CD8-positive, alpha-beta T cell (primary cell): ENCODE measurements at regions of chr6 and their contacts with region 1.

Region 1: GRCh38 chr6:32838114-32838958 is at the start of gene TAP2:
- DNase-seq: peak; percentile 96 to 99 (median 97)
- ATAC-seq: peak; percentile 90
- H3K4me3 ChIP-seq: peak within 1 kb of the TSS; percentile 64 to 83
- H3K4me3 Mint-ChIP-seq: peak within 1 kb of the TSS; percentile 93
- H3K27ac ChIP-seq: peak within 1 kb of the TSS; percentile 88 to 100
- H3K27ac Mint-ChIP-seq: peak within 1 kb of the TSS; percentile 98
- H3K4me1 ChIP-seq: peaks cover 60% of the 10 kb centered on the region
- H3K4me1 Mint-ChIP-seq: peaks cover 89% of the 10 kb centered on the region
- H3K27me3 ChIP-seq: no peaks in the 10 kb centered on the region
- H3K27me3 Mint-ChIP-seq: no peaks in the 10 kb centered on the region
- CTCF ChIP-seq: peak; percentile 99
- total RNA-seq, gene TAP2: 88.9 to 91.0 TPM

Region 2: GRCh38 chr6:32796848-32797776 is 41.2 kb before region 1 on chr6:
- CTCF ChIA-PET with region 1: interaction called, 14 read pairs
- POLR2A ChIA-PET with region 1: no interaction called
- intact Hi-C with region 1: no loop called
- DNase-seq: peak; percentile 60 to 88 (median 81)
- ATAC-seq: peak; percentile 79
- H3K4me3 ChIP-seq: peak overlapping the region in 1 of 2 experiments; percentile 33
- H3K4me3 Mint-ChIP-seq: peak overlapping the region; percentile 64
- H3K27ac ChIP-seq: no peak overlapping the region
- H3K27ac Mint-ChIP-seq: no peak overlapping the region
- H3K4me1 ChIP-seq: peaks cover 17% of the 10 kb centered on the region
- H3K4me1 Mint-ChIP-seq: peaks cover 27% of the 10 kb centered on the region
- H3K27me3 ChIP-seq: peaks cover 0 to 6% of the 10 kb centered on the region in 2 experiments
- H3K27me3 Mint-ChIP-seq: peaks cover 36% of the 10 kb centered on the region
- CTCF ChIP-seq: peak; percentile 97

Region 3: DNA sequence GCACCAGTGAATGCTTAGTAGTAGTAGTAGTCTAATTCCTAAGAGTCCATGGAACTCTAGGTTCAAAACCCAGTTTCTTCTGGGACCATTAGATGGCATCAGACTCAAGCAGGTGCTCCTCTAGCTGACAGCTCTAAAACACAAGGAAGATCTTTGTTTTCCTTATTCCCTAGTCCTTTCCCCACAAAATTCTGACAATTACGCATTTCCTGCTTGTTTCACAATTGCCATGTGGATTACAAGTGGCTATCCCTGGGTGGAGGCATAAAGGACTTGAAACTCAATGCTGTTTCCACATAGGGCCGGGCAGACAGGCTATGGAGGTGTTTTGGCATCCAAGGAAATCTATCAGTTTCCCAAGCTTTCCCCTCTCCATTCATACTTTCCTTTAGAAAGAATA is 12.4 kb before region 1 on chr6:
- CTCF ChIA-PET with region 1: interaction called, 60 read pairs
- POLR2A ChIA-PET with region 1: interaction called, 6 read pairs
- intact Hi-C with region 1: no loop called
- DNase-seq: peak in 1 of 9 experiments; percentile 39
- ATAC-seq: no peak
- H3K4me3 ChIP-seq: no peak overlapping the region
- H3K4me3 Mint-ChIP-seq: no peak overlapping the region
- H3K27ac ChIP-seq: no peak overlapping the region
- H3K27ac Mint-ChIP-seq: no peak overlapping the region
- H3K4me1 ChIP-seq: no peaks in the 10 kb centered on the region
- H3K4me1 Mint-ChIP-seq: peaks cover 2% of the 10 kb centered on the region
- H3K27me3 ChIP-seq: no peaks in the 10 kb centered on the region
- H3K27me3 Mint-ChIP-seq: no peaks in the 10 kb centered on the region
- CTCF ChIP-seq: no peak

Region 4: DNA sequence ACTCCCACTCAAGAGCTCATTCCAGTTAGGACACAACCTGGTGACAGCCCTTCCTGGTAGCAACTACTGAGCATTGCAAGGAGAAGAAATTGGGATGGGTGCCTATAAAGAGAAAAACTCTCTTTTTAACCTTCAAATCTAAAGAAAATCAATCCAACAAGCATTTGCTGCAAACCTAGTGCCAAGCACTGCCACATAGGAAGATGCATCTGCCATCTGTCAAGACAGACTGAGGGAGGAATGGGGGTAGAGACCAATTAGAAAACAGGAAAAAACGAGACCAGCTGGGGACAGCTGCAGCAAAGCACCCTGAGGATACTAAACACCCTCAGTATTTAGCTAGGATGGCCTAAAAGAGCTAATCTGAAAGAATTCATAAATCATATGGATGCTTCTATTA is 74.6 kb after region 1 on chr6:
- CTCF ChIA-PET with region 1: interaction called, 11 read pairs
- POLR2A ChIA-PET with region 1: interaction called, 3 read pairs
- intact Hi-C with region 1: no loop called
- DNase-seq: no peak
- ATAC-seq: no peak
- H3K4me3 ChIP-seq: no peak overlapping the region
- H3K4me3 Mint-ChIP-seq: no peak overlapping the region
- H3K27ac ChIP-seq: no peak overlapping the region
- H3K27ac Mint-ChIP-seq: no peak overlapping the region
- H3K4me1 ChIP-seq: no peaks in the 10 kb centered on the region
- H3K4me1 Mint-ChIP-seq: no peaks in the 10 kb centered on the region
- H3K27me3 ChIP-seq: no peaks in the 10 kb centered on the region
- H3K27me3 Mint-ChIP-seq: peaks cover 15% of the 10 kb centered on the region
- CTCF ChIP-seq: no peak

Region 5: DNA sequence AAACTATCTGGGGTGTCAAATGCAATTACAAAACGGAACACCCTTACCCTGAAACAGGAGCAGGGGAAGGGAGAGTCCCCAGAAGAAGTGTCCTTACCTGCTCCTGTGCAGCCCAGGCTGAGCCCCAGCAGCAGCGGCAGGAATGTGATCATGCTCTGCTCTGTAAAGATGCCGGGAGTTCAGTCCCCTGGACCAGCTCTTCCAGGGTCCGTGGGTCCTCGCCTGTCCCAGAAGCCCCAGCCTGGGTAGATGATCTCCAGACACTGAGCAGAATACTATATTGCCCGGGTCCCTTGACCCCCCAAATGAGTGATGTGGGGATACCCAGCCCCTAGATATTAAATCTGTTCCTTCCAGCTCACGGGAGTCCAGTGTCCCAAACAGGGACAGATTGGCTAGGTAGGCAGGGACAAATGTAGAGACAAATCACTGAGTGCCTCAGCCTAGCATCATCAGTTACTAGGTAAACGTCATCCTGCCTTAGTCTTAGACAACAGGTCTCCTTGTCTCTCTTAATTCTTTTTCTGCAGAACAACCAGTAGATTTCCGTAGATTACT is 102.4 kb after region 1 on chr6 and contains the start of gene HLA-DMB:
- CTCF ChIA-PET with region 1: interaction called, 7 read pairs
- POLR2A ChIA-PET with region 1: interaction called, 15 read pairs
- intact Hi-C with region 1: no loop called
- DNase-seq: peak in 7 of 9 experiments; percentile 18 to 91 (median 51)
- ATAC-seq: peak; percentile 78
- H3K4me3 ChIP-seq: peak within 1 kb of the TSS; percentile 64 to 79
- H3K4me3 Mint-ChIP-seq: peak within 1 kb of the TSS; percentile 94
- H3K27ac ChIP-seq: peak within 1 kb of the TSS; percentile 72 to 91
- H3K27ac Mint-ChIP-seq: peak within 1 kb of the TSS; percentile 97
- H3K4me1 ChIP-seq: peaks cover 61% of the 10 kb centered on the region
- H3K4me1 Mint-ChIP-seq: peaks cover 62% of the 10 kb centered on the region
- H3K27me3 ChIP-seq: no peaks in the 10 kb centered on the region
- H3K27me3 Mint-ChIP-seq: no peaks in the 10 kb centered on the region
- CTCF ChIP-seq: no peak
- total RNA-seq, gene HLA-DMB: 8.9 to 9.9 TPM

Region 6: GRCh38 chr6:34223956-34224940 is 1385.9 kb after region 1 on chr6:
- CTCF ChIA-PET with region 1: no interaction called
- POLR2A ChIA-PET with region 1: no interaction called
- intact Hi-C with region 1: loop called in 1 of 2 experiments (anchors 10 kb)
- DNase-seq: peak; percentile 88 to 99 (median 94)
- ATAC-seq: peak; percentile 98
- H3K4me3 ChIP-seq: peak overlapping the region; percentile 51 to 86
- H3K4me3 Mint-ChIP-seq: peak overlapping the region; percentile 70
- H3K27ac ChIP-seq: peak overlapping the region; percentile 76 to 87
- H3K27ac Mint-ChIP-seq: peak overlapping the region; percentile 89
- H3K4me1 ChIP-seq: peaks cover 14% of the 10 kb centered on the region
- H3K4me1 Mint-ChIP-seq: peaks cover 20% of the 10 kb centered on the region
- H3K27me3 ChIP-seq: no peaks in the 10 kb centered on the region
- H3K27me3 Mint-ChIP-seq: no peaks in the 10 kb centered on the region
- CTCF ChIP-seq: no peak